Heart right ventricle (tissue), 16 donors: ENCODE measurements at regions of chr20 and their contacts with region 1.

Region 1: DNA sequence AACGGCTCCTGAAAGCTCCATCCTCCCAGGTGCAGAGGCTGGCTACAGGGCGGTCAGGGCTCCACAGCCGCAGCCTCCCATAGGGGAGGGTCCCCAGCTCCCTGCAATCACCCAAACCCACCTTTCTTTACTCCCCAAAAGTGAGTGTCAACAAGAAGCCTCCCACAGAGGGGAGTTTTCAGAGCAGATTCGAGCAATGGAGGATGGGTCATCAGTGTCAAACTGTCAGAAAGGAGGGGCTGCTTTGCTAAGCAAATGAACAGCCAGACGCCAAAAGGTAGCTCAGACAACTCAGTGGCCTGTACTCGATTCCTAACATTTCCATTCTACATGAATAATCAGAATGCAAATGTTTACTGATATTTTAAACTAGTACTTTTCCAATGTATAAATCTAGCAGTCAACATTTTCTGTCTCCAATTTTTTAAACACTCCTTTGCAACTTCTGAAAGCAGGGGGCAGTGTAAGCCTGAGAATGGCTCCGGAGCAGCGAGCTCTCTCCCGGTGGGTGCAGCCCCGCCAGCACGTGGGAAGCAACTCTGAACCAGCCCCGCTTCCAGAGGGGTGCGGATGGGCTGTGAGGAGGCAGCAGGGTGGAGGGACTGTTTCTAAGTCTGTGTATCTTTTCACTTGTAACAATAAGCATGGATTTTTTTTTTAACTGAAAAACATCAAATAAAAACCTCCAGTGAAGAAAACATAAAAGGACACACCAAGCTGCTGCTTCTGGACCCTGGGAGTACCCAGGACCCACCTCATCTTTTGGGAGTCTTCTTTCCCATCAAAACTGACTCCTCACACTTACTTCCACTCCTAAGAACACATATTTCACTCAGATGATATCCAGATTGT is 54.9 kb downstream of the TAF4 start:
- DNase-seq: peak; percentile 40 to 53
- ATAC-seq: peak in 7 of 8 donors; percentile 53 to 76 (median 65)
- H3K4me3 ChIP-seq: no peak overlapping the region
- H3K27ac ChIP-seq: no peak overlapping the region
- H3K4me1 ChIP-seq: peaks cover 0 to 11% (median 4%) of the 10 kb centered on the region in 9 donors
- H3K27me3 ChIP-seq: no peaks in the 10 kb centered on the region
- CTCF ChIP-seq: peak in 8 of 9 donors; percentile 39 to 78 (median 72)

Region 2: GRCh38 chr20:61925555-61926252 is 85.1 kb before region 1 on chr20:
- intact Hi-C with region 1: no loop called
- DNase-seq: peak in 1 of 2 donors; percentile 4
- ATAC-seq: no peak
- H3K4me3 ChIP-seq: no peak overlapping the region
- H3K27ac ChIP-seq: no peak overlapping the region
- H3K4me1 ChIP-seq: no peaks in the 10 kb centered on the region
- H3K27me3 ChIP-seq: peaks cover 0 to 23% (median 11%) of the 10 kb centered on the region in 7 donors
- CTCF ChIP-seq: no peak

Region 3: DNA sequence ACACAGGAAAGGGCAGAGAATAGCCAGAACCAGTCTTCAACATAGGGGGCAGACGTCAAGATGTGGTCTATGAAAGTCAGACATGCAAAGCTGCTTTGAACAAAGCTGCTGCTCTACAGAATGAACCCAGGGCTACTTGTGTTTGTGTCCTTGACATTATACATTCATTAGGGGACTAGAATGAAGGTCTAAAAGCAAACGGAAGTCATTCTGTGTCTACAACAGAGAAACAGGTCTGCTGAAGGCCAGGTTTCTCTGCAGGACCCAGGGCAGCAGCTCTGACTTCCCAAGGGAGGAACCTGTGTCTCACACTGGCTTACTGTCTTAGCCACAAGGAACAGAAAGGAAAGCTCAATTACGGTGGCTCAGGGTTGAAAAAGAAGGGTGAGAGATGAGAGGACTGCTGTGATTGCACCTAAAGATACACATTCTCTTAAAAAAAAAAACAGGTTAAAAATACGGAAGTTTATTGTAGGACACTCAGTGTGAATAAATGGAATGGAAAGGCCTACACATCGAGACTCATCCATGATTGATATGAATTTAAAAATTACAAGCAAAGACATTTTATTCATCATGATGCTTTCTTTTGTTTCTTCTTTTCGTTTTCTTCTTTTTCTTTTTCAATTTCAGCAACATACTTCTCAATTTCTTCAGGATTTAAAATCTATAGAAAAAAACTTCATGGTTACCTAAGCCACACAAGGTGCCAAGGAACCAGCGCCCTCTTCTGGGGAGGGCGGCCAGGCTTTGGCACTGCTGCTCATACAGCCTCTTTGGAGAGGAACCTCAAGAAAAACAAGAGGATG is 125.7 kb after region 1 on chr20:
- intact Hi-C with region 1: loop called in 6 of 10 experiments (anchors 5 kb)
- DNase-seq: peak; percentile 56 to 63
- ATAC-seq: peak in 4 of 8 donors; percentile 28 to 48 (median 42)
- H3K4me3 ChIP-seq: no peak overlapping the region
- H3K27ac ChIP-seq: no peak overlapping the region
- H3K4me1 ChIP-seq: peaks cover 26 to 59% (median 49%) of the 10 kb centered on the region in 9 donors
- H3K27me3 ChIP-seq: no peaks in the 10 kb centered on the region
- CTCF ChIP-seq: peak; percentile 29 to 86 (median 79)

Region 4: DNA sequence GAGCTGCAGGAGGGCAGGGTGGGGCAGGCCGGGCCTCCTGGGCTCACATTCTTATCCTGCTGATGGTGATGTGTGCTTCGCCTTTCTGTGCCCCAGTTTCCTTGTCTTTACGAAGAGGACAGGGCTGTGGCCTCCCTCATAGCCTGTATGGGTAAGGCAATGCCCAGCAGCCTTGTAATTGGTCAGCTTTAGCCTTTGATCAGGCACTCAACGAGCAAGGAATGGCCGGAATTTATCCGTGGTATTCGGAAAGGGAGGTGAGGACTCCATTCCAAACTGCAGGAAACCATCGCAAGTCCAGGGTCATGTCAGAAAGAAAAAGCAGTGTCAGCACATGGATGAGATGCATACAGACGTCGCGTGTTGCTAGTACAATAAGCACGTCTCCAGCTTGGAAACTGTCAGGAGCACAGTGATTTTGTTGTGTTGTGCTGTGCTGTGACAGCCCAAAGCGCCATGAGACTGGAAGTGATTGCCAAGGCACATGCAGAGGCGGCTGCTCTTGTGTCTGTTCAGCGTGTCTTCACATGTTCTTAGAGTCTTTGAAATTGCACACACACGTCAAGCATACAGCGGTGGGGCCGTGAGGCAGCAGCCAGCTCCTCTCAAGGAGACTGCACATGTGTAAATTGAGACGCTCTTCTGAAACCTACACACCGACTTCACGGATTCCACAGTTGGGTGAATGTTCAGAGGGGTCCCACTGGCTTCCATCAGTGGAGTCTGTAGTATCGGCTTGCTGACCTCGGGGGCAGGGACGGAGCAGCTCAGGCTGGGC is 138.9 kb after region 1 on chr20:
- intact Hi-C with region 1: loop called in 4 of 10 experiments (anchors 5 kb)
- DNase-seq: no peak
- ATAC-seq: peak in 2 of 8 donors; percentile 8 to 24
- H3K4me3 ChIP-seq: no peak overlapping the region
- H3K27ac ChIP-seq: peak overlapping the region in 3 of 10 donors; percentile 10 to 37 (median 11)
- H3K4me1 ChIP-seq: peaks cover 4 to 43% (median 27%) of the 10 kb centered on the region in 9 donors
- H3K27me3 ChIP-seq: no peaks in the 10 kb centered on the region
- CTCF ChIP-seq: no peak

Region 5: GRCh38 chr20:62156592-62157386 is 146.0 kb after region 1 on chr20:
- intact Hi-C with region 1: loop called in 5 of 10 experiments (anchors 5 kb)
- DNase-seq: peak; percentile 59 to 71
- ATAC-seq: peak; percentile 82 to 90 (median 86)
- H3K4me3 ChIP-seq: no peak overlapping the region
- H3K27ac ChIP-seq: no peak overlapping the region
- H3K4me1 ChIP-seq: peaks cover 5 to 15% (median 10%) of the 10 kb centered on the region in 9 donors
- H3K27me3 ChIP-seq: no peaks in the 10 kb centered on the region
- CTCF ChIP-seq: peak; percentile 51 to 81 (median 75)

Region 6: DNA sequence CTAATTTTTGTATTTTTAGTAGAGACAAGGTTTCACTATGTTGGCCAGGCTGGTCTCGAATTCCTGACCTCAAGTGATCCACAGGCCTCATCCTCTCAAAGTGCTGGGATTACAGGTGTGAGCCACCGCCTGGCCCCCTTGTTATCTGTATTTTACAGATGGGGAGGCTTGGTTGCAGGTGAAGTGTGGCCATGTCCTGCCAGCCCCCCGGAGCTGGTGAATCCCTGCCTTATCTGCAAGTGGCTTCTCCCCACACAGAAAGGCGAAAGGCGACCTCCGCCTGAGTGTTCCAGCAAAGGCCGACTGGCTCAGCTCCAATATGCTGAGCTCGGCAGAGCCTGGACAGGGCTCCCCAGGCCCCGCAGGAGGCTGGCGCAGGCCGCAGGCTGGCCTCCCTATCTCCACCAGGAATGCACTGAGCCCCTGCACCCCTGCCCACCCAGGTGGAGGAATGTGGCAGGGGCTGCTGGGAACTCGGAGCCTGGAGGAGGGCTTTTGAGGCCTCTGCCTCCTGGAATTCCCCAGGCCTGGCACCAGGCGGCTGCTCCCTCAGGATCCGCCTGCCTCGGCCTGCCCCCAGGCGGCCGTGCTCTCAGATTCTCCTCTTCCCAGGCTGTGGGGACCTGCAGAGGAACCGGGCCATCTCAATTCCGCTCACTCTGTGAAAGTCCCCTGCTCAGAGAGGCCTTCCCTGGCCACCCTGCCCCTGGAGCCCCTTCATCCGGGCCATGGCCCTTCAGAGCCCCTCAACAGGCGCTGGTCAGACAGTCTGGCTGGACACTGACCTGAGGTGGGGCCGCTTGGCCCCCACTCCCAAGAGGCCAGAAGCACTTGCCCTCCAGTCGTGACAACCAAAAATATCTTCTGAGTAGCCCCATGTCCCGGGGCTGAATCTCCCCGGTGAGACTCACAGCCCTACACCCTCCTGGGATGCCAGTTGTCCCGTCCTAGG is 365.6 kb after region 1 on chr20:
- intact Hi-C with region 1: loop called in 3 of 10 experiments (anchors 10 kb)
- DNase-seq: peak; percentile 52 to 62
- ATAC-seq: peak; percentile 40 to 84 (median 68)
- H3K4me3 ChIP-seq: no peak overlapping the region
- H3K27ac ChIP-seq: peak overlapping the region in 8 of 10 donors; percentile 40 to 84 (median 61)
- H3K4me1 ChIP-seq: peaks cover 6 to 69% (median 44%) of the 10 kb centered on the region in 9 donors
- H3K27me3 ChIP-seq: no peaks in the 10 kb centered on the region
- CTCF ChIP-seq: peak; percentile 10 to 63 (median 55)

Region 7: GRCh38 chr20:62386383-62387218 is 375.8 kb after region 1 on chr20 and contains the start of gene RPS21:
- intact Hi-C with region 1: loop called in 2 of 10 experiments (anchors 10 kb)
- DNase-seq: peak; percentile 93 to 95
- ATAC-seq: peak; percentile 91 to 96 (median 95)
- H3K4me3 ChIP-seq: peak within 1 kb of the TSS; percentile 76 to 100 (median 92)
- H3K27ac ChIP-seq: peak within 1 kb of the TSS; percentile 79 to 99 (median 96)
- H3K4me1 ChIP-seq: peaks cover 9 to 47% (median 34%) of the 10 kb centered on the region in 9 donors
- H3K27me3 ChIP-seq: no peaks in the 10 kb centered on the region
- CTCF ChIP-seq: peak in 1 of 9 donors; percentile 12
- total RNA-seq, gene RPS21: 512 to 811 (median 576) TPM

Region 8: GRCh38 chr20:62407221-62407992 is 396.6 kb after region 1 on chr20 and contains the start of gene CABLES2:
- intact Hi-C with region 1: loop called in 2 of 10 experiments (anchors 10 kb)
- DNase-seq: peak; percentile 95
- ATAC-seq: peak; percentile 79 to 96 (median 92)
- H3K4me3 ChIP-seq: peak within 1 kb of the TSS; percentile 42 to 81 (median 62)
- H3K27ac ChIP-seq: peak within 1 kb of the TSS in 9 of 10 donors; percentile 2 to 82 (median 62)
- H3K4me1 ChIP-seq: peaks cover 14 to 38% (median 31%) of the 10 kb centered on the region in 9 donors
- H3K27me3 ChIP-seq: no peaks in the 10 kb centered on the region
- CTCF ChIP-seq: peak in 5 of 9 donors; percentile 3 to 31 (median 15)
- total RNA-seq, gene CABLES2: 5.6 to 11.9 (median 8.0) TPM